Right ventricle myocardium superior (tissue), 1 donor: ENCODE measurements at regions of chr3 and their contacts with region 1.

Region 1: DNA sequence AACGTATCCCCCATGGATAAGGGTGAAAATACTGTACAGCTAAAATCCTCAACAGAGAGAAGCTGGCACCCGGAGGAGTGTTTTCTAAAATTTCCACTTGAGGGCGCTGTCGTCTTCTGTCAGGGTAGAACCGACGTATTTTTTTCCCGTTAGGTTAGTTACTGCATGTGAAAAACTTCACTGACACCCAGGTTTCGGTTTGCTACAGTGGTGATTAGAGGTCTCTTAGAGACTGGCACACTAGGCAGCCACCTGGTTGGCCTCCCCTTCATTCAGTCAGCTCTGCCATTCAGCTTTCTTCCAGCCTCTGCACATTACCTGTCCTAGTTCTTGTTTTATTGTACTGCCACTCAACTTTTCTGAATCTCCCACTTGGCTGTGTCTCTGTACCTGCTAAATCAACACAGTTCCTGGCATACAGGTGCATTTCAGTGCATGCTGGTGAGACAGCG is 18.4 kb downstream of the CCK start:
- DNase-seq: peak; percentile 49
- ATAC-seq: peak; percentile 75

Region 2: DNA sequence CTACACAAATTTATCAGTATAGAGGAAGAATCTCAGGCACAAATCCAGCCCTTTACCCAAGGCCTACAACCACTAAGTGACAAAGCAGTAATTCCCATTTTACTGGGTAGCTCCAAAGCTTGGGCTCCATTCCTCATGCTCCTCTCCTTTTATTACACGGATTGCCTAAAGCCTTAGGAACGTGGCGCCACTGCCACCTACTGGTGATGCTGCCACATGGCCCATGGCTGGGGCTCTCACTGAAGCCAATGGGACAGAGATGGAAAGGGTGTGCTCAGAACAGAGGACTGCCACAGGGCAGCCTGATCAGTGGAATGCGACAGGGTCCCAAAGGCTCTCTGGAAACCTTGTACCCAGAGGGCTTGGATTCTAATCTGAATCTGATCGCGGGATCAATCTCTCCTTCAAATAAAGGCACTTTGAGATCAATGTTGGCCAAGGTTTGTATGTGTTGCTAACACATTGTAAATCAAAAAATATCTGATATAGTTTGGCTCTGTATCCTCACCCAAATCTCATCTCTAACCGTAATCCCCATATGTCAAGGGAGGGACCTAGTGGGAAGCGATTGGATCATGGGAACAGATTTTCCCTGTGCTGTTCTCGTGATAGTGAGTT is 196.3 kb after region 1 on chr3:
- intact Hi-C with region 1: loop called (anchors 5 kb)
- DNase-seq: peak; percentile 89
- ATAC-seq: peak; percentile 97